ENCODE measurements at regions of chr2 and their contacts with region 1.

Region 1: DNA sequence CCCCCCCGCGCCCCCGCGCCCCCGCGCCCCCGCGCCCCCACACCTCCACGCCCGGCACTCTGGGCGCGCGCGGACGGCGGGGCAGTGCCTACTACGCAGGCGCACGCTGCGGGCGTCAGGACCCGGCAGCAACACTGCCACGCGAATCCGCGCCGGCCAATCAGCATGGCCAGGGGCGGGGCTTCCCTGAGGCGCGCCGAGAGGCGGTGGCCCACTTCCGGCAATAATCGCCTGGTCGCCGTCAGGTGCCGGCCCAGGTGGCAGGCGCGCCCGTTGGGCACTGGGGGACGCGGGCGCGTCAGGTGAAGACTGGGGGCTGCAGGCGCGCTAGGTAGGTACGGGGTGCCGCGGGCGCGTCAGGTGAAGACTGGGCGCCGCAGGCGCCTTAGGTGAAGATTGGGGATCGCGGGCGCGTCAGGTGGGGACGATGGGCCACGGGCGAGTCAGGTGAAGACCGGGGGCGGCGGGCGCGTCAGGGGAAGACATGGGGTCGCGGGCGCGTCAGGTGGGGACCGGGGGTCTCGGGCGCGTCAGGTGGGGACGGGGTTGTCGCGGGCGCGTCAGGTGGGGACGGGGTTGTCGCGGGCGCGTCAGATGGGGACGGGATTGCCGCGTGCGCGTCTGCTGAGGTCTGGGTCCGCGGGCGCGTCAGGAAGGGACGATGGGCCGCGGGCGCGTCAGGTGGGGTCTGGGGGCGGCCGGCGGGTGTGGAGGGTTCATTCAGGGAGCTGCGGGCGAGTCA is 219.1 kb downstream of the RTP5 start:
- DNase-seq: peak; percentile 85 to 96 (median 92)
- ATAC-seq: peak; percentile 96
- H3K4me3 ChIP-seq: peak overlapping the region; percentile 63 to 69
- H3K4me3 Mint-ChIP-seq: peak overlapping the region; percentile 84
- H3K27ac ChIP-seq: peak overlapping the region; percentile 58 to 60
- H3K27ac Mint-ChIP-seq: peak overlapping the region; percentile 89
- H3K4me1 ChIP-seq: peaks cover 20% of the 10 kb centered on the region
- H3K4me1 Mint-ChIP-seq: peaks cover 26% of the 10 kb centered on the region
- H3K27me3 ChIP-seq: no peaks in the 10 kb centered on the region
- H3K27me3 Mint-ChIP-seq: no peaks in the 10 kb centered on the region
- CTCF ChIP-seq: no peak

Region 2: GRCh38 chr2:241965931-241966412 is 122.7 kb before region 1 on chr2:
- CTCF ChIA-PET with region 1: no interaction called
- POLR2A ChIA-PET with region 1: no interaction called
- intact Hi-C with region 1: loop called in 1 of 2 experiments (anchors 5 kb)
- DNase-seq: peak; percentile 19 to 81 (median 65)
- ATAC-seq: peak; percentile 88
- H3K4me3 ChIP-seq: peak overlapping the region; percentile 24 to 32
- H3K4me3 Mint-ChIP-seq: peak overlapping the region; percentile 78
- H3K27ac ChIP-seq: peak overlapping the region; percentile 4 to 52
- H3K27ac Mint-ChIP-seq: peak overlapping the region; percentile 89
- H3K4me1 ChIP-seq: peaks cover 15% of the 10 kb centered on the region
- H3K4me1 Mint-ChIP-seq: peaks cover 17% of the 10 kb centered on the region
- H3K27me3 ChIP-seq: no peaks in the 10 kb centered on the region
- H3K27me3 Mint-ChIP-seq: no peaks in the 10 kb centered on the region
- CTCF ChIP-seq: no peak

Region 3: DNA sequence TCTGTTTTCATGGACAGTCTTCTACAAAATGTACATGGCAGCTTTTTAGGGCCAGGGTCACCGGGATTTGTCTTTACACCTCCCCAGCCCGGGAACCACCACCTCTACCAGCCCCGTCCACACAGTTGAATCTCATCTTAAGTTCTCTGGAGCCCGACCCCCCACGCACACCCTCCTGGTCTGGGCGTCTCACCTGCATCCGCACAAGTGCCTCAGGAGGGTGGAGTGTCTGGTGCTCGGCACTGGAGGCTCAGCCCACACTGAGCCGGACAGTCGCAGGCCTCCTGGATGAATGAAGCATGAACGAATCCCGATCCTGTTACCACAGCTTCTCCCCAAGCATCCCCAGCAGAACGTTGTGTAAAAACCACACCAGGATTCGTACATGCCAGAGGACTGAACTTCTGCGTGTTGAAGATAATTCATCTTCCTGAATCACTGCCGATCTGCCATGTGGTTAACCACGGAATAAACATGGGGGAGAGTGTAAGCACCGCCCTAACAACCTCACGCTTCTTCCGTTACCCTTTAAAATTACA is 57.1 kb before region 1 on chr2:
- CTCF ChIA-PET with region 1: no interaction called
- POLR2A ChIA-PET with region 1: no interaction called
- intact Hi-C with region 1: loop called in 1 of 2 experiments (anchors 2 kb)
- DNase-seq: peak; percentile 22 to 86 (median 63)
- ATAC-seq: peak; percentile 92
- H3K4me3 ChIP-seq: peak overlapping the region; percentile 51
- H3K4me3 Mint-ChIP-seq: peak overlapping the region; percentile 87
- H3K27ac ChIP-seq: peak overlapping the region in 1 of 2 experiments; percentile 54
- H3K27ac Mint-ChIP-seq: peak overlapping the region; percentile 93
- H3K4me1 ChIP-seq: peaks cover 39% of the 10 kb centered on the region
- H3K4me1 Mint-ChIP-seq: peaks cover 31% of the 10 kb centered on the region
- H3K27me3 ChIP-seq: peaks cover 0 to 20% of the 10 kb centered on the region in 2 experiments
- H3K27me3 Mint-ChIP-seq: no peaks in the 10 kb centered on the region
- CTCF ChIP-seq: no peak

Measured in CD8-positive, alpha-beta T cell (primary cell).